Cardiac septum (tissue), 1 donor: ENCODE measurements at regions of chr7 and their contacts with region 1.

Region 1: GRCh38 chr7:75966190-75966961 is 28.0 kb downstream of the TMEM120A start:
- DNase-seq: no peak

Region 2: GRCh38 chr7:75878769-75879611 is 87.4 kb before region 1 on chr7 and contains the start of gene RHBDD2:
- intact Hi-C with region 1: loop called (anchors 5 kb)
- DNase-seq: peak; percentile 98
- total RNA-seq, gene RHBDD2: 33.6 TPM

Region 3: DNA sequence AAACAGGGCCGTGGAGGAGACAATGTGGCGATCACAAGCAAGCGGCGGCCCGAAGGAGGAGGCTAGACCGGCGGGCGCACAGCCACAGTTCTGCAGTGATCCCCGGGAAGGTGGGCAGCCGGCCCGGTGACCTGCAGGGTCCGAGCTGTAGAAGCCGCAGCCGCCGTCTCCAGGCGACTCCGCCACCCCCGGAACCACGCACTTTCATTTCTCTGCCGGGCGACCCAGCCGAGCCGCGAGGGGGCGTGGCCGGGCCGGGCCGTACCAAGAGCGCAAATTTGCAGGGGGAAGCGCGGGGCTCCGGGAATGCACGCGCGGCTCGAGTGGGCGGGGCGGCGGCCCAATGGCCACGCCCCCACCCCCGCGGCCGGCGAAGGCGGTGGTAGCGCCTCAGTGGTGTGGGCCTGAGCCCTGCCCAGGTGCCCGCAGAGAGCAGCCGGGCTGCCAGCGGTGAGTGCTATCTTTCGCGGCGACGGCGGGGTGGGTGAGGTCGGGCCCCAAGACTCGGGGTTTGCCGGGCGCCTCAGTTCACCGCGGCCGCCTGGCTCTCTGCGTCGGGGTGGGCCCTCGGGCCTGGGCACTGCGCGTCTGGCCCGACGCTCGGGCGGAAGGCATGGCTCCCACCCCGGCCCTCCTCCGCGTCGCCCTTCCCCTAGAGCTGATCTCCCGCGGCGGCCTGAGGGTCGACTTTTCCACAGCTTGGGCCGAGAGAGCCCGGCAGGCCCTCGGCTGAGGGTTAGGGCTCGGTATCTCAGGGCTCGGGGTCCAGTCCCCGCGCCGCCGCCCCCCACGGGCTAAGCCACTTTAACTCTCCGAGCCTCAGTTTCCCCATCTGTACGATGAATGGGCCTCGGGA is 51.4 kb before region 1 on chr7 and contains the start of gene POR:
- intact Hi-C with region 1: loop called (anchors 5 kb)
- DNase-seq: peak; percentile 99
- total RNA-seq, gene POR: 39.7 TPM

Region 4: DNA sequence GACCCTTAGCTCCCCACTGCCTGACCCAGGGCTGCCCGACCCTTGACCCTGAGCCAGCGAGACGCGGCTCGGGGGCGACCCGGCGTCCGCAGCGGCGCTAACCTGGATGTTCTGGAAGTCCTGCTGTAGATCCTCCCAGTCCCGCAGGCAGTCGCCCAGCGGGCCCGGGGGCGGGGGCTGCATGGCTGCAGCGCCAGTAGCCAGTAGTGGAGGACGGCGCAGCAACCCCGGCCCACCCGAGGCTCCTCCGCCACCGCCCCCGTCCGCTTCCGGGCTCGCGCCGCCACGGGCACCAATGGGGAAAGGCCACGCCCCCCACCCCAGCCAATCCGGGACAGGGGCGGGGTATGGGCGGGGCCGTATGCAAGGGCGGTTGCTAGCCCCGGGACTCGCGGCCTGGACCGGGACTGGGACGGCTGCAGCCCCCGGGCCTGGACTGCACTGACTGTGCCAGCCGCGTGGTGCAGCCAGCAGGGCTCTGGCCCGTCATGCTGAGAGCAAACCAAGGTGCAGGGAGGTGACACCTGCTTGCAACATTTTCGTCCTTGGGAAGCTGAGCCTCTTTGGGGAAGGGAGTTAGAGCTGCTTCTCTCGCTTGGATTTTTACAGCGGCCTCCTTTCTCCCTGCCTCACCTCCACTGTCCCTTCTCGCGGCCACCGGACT is 28.1 kb after region 1 on chr7 and contains the start of gene TMEM120A:
- intact Hi-C with region 1: loop called (anchors 2 kb)
- DNase-seq: peak; percentile 98
- total RNA-seq, gene TMEM120A: 138 TPM

Region 5: DNA sequence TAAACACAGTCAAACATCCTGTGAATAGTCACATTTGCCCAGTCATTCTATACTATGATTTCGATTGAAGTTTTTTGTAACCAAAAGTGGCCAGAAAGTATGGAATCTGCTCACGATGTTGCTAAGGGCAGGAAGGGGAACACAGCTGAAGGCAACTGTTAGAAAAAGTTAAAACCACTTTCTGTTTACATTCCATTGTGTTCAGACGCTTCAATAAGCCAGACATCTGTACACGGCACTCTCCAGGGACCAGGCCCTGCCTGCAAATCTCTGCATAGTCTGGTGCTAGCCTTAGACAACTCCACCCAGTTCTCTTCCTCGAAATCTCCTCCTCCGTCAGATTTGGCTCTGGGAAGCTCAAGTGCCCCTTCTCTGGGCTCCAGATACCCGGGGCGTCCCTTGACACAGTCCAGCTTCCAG is 45.1 kb after region 1 on chr7:
- intact Hi-C with region 1: loop called (anchors 5 kb)
- DNase-seq: no peak

Region 6: GRCh38 chr7:76054128-76055120 is 88.0 kb after region 1 on chr7:
- intact Hi-C with region 1: no loop called
- DNase-seq: no peak